ENCODE measurements at regions of chr6 and their contacts with region 1.

Region 1: DNA sequence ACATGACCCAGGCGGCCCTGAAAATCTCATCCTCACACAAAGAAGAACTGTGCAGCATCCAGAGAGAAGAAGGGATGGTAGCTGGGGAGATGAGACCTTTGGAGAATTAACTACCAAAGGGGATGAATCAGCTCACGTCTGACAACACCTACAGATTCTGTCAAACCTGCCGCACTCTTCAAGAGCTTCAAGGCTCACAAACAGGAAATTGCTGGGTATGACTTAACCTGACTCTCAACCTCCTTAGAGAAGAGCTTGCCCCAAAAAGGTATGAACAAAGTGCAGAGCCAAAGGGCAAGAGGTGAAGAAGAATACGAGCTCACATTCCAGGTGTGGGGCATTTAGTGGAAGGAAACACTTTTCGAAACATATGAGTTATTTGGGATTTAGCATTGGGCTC is 139.8 kb downstream of the BACH2 start:
- DNase-seq: no peak
- H3K4me3 ChIP-seq: no peak overlapping the region
- H3K27ac ChIP-seq: no peak overlapping the region
- H3K4me1 ChIP-seq: peaks cover 0 to 22% of the 10 kb centered on the region in 2 donors
- H3K27me3 ChIP-seq: no peaks in the 10 kb centered on the region
- CTCF ChIP-seq: no peak

Region 2: GRCh38 chr6:90103056-90103800 is 53.6 kb before region 1 on chr6:
- intact Hi-C with region 1: loop called (anchors 2 kb)
- DNase-seq: no peak
- H3K4me3 ChIP-seq: no peak overlapping the region
- H3K27ac ChIP-seq: no peak overlapping the region
- H3K4me1 ChIP-seq: peaks cover 0 to 17% of the 10 kb centered on the region in 2 donors
- H3K27me3 ChIP-seq: no peaks in the 10 kb centered on the region
- CTCF ChIP-seq: no peak

Region 3: GRCh38 chr6:90446164-90446563 is 289.3 kb after region 1 on chr6:
- intact Hi-C with region 1: no loop called
- DNase-seq: no peak
- H3K4me3 ChIP-seq: no peak overlapping the region
- H3K27ac ChIP-seq: no peak overlapping the region
- H3K4me1 ChIP-seq: peaks cover 0 to 4% of the 10 kb centered on the region in 2 donors
- H3K27me3 ChIP-seq: no peaks in the 10 kb centered on the region
- CTCF ChIP-seq: no peak